ENCODE measurements at regions of chr20 and their contacts with region 1.

Region 1: GRCh38 chr20:50948132-50948785 is 10.1 kb downstream of the DPM1 start:
- DNase-seq: no peak
- H3K4me3 ChIP-seq: no peak overlapping the region
- H3K4me3 Mint-ChIP-seq: no peak overlapping the region
- H3K27ac Mint-ChIP-seq: peak overlapping the region; percentile 46
- H3K4me1 ChIP-seq: peaks cover 9% of the 10 kb centered on the region; the same call in 1 of the 2 replicates
- H3K4me1 Mint-ChIP-seq: peaks cover 14% of the 10 kb centered on the region
- H3K27me3 ChIP-seq: no peaks in the 10 kb centered on the region
- H3K27me3 Mint-ChIP-seq: no peaks in the 10 kb centered on the region
- CTCF ChIP-seq: no peak

Region 2: DNA sequence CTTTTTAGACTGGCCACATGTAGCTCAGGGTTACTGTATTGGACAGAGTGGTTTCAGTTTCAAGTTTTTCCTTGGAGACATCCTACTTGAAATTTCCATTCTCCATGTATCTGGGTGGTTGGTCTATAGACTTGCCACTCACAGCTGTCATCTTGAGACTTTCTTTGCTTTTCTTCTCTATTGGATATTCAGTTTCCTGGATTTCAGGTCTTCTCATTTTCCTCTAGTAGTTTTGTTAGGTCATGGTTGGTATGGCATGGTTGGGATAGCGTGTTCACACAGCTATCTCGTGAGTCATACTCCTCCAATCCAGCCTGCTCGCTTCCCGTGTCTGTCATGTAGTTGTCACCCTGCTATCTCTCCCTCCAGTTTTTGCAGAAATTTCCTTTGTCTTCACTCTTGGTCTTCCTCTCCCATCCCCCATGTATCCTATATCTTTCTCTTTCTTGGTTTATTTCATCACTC is 389.7 kb before region 1 on chr20:
- CTCF ChIA-PET with region 1: no interaction called
- POLR2A ChIA-PET with region 1: no interaction called
- intact Hi-C with region 1: no loop called
- DNase-seq: no peak
- H3K4me3 ChIP-seq: no peak overlapping the region
- H3K4me3 Mint-ChIP-seq: no peak overlapping the region
- H3K27ac Mint-ChIP-seq: no peak overlapping the region
- H3K4me1 ChIP-seq: peaks cover 21% of the 10 kb centered on the region
- H3K4me1 Mint-ChIP-seq: peaks cover 13% of the 10 kb centered on the region
- H3K27me3 ChIP-seq: no peaks in the 10 kb centered on the region
- H3K27me3 Mint-ChIP-seq: no peaks in the 10 kb centered on the region
- CTCF ChIP-seq: no peak

Region 3: GRCh38 chr20:50594591-50595432 is 353.4 kb before region 1 on chr20:
- CTCF ChIA-PET with region 1: no interaction called
- POLR2A ChIA-PET with region 1: no interaction called
- intact Hi-C with region 1: no loop called
- DNase-seq: peak in 1 of 2 experiments; percentile 59
- H3K4me3 ChIP-seq: no peak overlapping the region
- H3K4me3 Mint-ChIP-seq: no peak overlapping the region
- H3K27ac Mint-ChIP-seq: no peak overlapping the region
- H3K4me1 ChIP-seq: no peaks in the 10 kb centered on the region
- H3K4me1 Mint-ChIP-seq: peaks cover 6% of the 10 kb centered on the region
- H3K27me3 ChIP-seq: no peaks in the 10 kb centered on the region
- H3K27me3 Mint-ChIP-seq: no peaks in the 10 kb centered on the region
- CTCF ChIP-seq: peak in 1 of 2 experiments; percentile 17

Region 4: DNA sequence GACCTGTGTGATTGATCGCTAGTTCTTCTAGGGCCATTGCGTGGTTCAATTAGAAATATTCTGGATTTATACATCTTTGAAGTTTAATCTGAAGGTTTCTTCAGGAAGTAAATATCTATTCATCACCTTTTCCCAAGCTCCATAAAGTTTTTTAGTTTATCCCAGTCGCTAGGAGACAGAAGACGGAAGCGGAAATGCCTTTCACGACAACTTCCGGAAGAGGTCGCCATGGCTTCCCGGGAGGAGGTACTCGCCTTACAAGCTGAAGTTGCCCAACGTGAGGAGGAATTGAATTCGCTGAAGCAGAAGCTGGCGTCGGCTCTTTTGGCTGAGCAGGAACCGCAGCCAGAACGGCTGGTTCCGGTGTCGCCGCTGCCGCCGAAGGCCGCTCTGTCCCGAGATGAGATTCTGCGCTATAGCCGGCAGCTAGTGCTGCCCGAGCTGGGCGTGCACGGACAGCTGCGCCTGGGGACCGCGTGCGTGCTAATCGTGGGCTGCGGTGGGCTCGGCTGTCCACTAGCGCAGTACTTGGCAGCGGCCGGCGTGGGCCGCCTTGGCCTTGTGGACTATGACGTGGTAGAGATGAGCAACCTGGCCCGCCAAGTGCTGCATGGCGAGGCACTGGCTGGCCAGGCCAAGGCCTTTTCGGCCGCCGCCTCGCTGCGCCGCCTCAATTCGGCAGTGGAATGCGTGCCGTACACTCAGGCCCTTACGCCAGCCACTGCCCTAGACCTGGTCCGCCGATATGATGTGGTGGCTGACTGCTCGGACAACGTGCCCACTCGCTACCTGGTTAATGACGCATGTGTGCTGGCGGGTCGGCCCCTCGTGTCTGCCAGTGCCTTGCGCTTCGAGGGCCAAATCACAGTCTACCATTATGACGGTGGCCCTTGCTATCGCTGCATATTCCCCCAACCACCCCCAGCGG is 10.6 kb after region 1 on chr20 and contains the start of gene MOCS3:
- CTCF ChIA-PET with region 1: no interaction called
- POLR2A ChIA-PET with region 1: interaction called, 10 read pairs
- intact Hi-C with region 1: no loop called
- DNase-seq: peak; percentile 94 to 96
- H3K4me3 ChIP-seq: peak within 1 kb of the TSS; percentile 91
- H3K4me3 Mint-ChIP-seq: peak within 1 kb of the TSS; percentile 92
- H3K27ac Mint-ChIP-seq: peak within 1 kb of the TSS; percentile 97
- H3K4me1 ChIP-seq: peaks cover 16% of the 10 kb centered on the region
- H3K4me1 Mint-ChIP-seq: peaks cover 22% of the 10 kb centered on the region
- H3K27me3 ChIP-seq: no peaks in the 10 kb centered on the region
- H3K27me3 Mint-ChIP-seq: no peaks in the 10 kb centered on the region
- CTCF ChIP-seq: peak in 1 of 2 experiments; percentile 37
- total RNA-seq, gene MOCS3: 12.9 and 13.2 TPM in 2 replicates